ENCODE measurements at regions of chr9 and their contacts with region 1.

Region 1: GRCh38 chr9:79129865-79130480 is 441.8 kb upstream of the TLE4 start:
- DNase-seq: peak in 1 of 2 experiments; percentile 66
- H3K4me3 ChIP-seq: no peak overlapping the region
- H3K27ac ChIP-seq: no peak overlapping the region
- H3K4me1 ChIP-seq: peaks cover 0 to 11% (median 2%) of the 10 kb centered on the region in 4 experiments; a peak in 2 of 7 replicates
- H3K27me3 ChIP-seq: no peaks in the 10 kb centered on the region
- CTCF ChIP-seq: peak; percentile 47 to 78 (median 77)
- EP300 ChIP-seq: no peak
- POLR2A ChIP-seq: no peak
- RAD21 ChIP-seq: peak; percentile 81 to 83

Region 2: DNA sequence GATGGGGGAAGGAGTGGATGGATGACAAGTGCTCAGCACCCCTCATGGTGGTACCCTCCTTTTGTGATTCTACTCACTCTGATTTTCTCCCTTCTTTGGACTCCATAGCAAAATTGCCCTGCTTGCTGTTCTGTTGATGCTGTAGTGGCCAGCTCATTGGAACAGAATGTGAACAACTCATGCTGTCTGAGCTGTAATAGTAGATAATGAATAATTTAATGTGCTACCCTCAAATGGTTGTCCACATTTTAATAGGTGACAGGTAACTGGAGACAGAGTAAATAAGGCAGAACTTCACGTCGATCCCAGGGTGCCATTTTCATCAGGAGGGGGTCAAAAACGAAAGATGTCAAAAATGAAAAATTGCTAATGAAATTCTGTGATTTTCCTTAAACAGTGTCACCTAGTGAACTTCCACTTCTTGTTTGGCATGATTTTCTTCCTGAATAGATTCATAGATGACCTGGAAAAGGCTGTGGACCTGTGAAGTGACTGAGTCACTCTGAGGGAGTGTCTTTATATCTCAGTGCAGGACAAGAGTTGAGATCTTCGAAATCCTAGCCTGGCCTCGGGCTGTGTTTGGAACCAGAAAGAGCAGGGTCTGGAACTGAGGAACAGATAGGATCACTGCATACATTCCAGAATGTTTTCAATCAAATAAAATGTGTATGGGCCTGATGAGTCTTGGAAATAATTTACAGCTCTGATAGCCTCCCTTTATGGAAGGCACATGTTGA is 562.9 kb before region 1 on chr9:
- CTCF ChIA-PET with region 1: no interaction called
- POLR2A ChIA-PET with region 1: no interaction called
- DNase-seq: no peak
- H3K4me3 ChIP-seq: no peak overlapping the region
- H3K27ac ChIP-seq: no peak overlapping the region
- H3K4me1 ChIP-seq: peaks cover 0 to 3% (median 0%) of the 10 kb centered on the region in 4 experiments; a peak in 1 of 7 replicates
- H3K27me3 ChIP-seq: no peaks in the 10 kb centered on the region
- CTCF ChIP-seq: no peak
- EP300 ChIP-seq: no peak
- POLR2A ChIP-seq: no peak
- RAD21 ChIP-seq: no peak

Region 3: DNA sequence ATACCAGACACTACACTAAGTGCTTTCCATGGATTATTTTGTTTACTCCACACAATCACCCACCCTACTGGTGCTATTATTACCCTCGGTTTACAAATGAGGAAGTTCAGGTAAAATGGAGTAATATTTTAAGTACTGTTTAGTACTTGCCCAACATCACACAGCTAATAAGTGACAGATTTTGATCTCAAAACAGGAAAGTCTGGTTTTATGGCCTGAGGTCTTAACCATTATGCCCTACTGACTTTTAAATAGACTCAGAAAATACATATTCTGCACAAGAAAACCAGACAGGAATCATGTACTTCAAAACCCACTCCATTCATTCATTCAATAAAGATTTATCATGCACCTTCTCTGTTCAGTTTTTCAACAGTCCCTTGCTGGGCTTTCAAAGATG is 10.8 kb after region 1 on chr9:
- CTCF ChIA-PET with region 1: interaction called, 21 read pairs
- POLR2A ChIA-PET with region 1: no interaction called
- DNase-seq: no peak
- H3K4me3 ChIP-seq: no peak overlapping the region
- H3K27ac ChIP-seq: no peak overlapping the region
- H3K4me1 ChIP-seq: no peaks in the 10 kb centered on the region
- H3K27me3 ChIP-seq: no peaks in the 10 kb centered on the region
- CTCF ChIP-seq: no peak
- EP300 ChIP-seq: no peak
- POLR2A ChIP-seq: no peak
- RAD21 ChIP-seq: no peak

Region 4: GRCh38 chr9:79152306-79152705 is 22.3 kb after region 1 on chr9:
- CTCF ChIA-PET with region 1: interaction called, 21 read pairs
- POLR2A ChIA-PET with region 1: no interaction called
- DNase-seq: no peak
- H3K4me3 ChIP-seq: no peak overlapping the region
- H3K27ac ChIP-seq: no peak overlapping the region
- H3K4me1 ChIP-seq: no peaks in the 10 kb centered on the region
- H3K27me3 ChIP-seq: no peaks in the 10 kb centered on the region
- CTCF ChIP-seq: no peak
- EP300 ChIP-seq: no peak
- POLR2A ChIP-seq: no peak
- RAD21 ChIP-seq: no peak

Region 5: DNA sequence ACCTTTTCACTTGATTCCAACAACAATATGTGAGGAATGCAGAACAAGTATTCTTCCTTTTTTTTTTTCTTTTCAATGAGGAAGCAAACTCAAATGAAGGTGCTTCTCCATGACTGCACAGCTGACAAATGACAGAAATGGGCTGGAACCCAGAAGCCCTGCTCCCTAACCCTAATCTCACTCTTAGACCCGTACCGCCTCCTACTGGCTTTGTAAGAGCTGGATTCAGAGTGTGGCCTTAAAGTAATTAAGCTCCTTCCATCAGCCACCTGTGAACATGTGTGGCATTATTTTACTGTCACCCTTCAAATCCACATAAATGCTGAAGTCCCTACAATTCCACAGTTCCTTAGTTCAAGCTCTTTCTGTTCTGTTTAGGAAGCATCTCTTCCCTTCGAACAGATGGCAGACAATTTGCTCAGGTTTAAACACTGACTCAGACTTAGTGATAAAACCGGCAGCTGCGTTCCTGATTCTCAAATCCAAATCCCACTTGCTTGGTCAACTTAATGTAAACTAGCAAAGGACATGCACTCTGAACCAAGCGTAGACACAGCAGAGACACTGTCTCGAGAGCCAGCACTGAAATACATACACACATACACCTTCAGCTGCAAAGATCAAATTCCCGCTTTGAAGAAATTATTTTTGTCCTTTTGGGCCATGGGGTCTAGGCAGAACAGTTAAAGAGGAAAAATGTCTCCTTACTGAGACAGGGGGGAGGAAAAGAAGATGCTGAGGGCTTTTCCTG is 125.1 kb after region 1 on chr9:
- CTCF ChIA-PET with region 1: interaction called, 27 read pairs
- POLR2A ChIA-PET with region 1: no interaction called
- DNase-seq: no peak
- H3K4me3 ChIP-seq: no peak overlapping the region
- H3K27ac ChIP-seq: no peak overlapping the region
- H3K4me1 ChIP-seq: peaks cover 0 to 9% (median under 1%) of the 10 kb centered on the region in 4 experiments; a peak in 3 of 7 replicates
- H3K27me3 ChIP-seq: no peaks in the 10 kb centered on the region
- CTCF ChIP-seq: peak; percentile 45 to 85 (median 74)
- EP300 ChIP-seq: no peak
- POLR2A ChIP-seq: no peak
- RAD21 ChIP-seq: peak; percentile 90 to 92

Measured in H1 (cell line).